ENCODE measurements at regions of chr4 and their contacts with region 1.

Region 1: GRCh38 chr4:109977854-109978501 is 65.3 kb downstream of the EGF start:
- DNase-seq: peak; percentile 51
- H3K4me3 ChIP-seq: no peak overlapping the region
- H3K27ac ChIP-seq: no peak overlapping the region
- H3K4me1 ChIP-seq: no peaks in the 10 kb centered on the region
- H3K27me3 ChIP-seq: peaks cover 17 to 20% of the 10 kb centered on the region in 2 experiments
- CTCF ChIP-seq: peak; percentile 34 to 43
- POLR2A ChIP-seq: no peak

Region 2: DNA sequence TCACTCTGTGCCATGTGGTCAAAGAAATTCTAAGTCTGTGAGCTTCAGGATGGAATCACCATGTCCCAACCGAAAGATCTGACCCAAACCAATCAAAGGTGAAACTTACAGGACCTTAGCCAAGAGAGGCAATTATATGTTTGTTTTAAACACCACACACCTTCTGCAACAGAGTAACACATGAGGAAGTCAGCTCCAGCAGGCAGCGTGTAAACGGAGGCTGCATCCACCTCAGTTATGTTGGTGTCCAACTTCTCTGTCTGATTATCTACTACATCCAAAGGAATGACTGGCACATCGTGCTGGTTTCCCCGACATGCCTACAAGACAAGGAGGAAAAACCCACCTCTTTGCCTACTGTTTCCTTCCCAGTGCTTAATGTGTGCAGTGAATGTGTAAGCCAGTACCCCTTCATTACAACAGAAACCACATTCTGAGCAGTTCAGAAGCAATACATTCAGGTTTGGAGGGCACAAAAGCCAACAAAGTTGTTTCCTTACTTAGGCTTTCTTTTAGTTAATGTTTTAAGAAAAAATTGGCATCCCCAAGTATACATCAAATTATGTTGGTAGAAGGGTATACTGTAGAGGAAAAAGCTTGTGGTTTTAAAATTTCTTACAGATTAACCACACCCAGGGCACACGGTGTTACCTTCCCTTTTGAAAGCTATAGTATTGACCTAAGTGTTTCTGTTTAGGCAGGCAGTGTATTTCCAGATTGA is 287.1 kb before region 1 on chr4:
- CTCF ChIA-PET with region 1: no interaction called
- POLR2A ChIA-PET with region 1: no interaction called
- dilution Hi-C with region 1: no loop called
- intact Hi-C with region 1: no loop called
- DNase-seq: no peak
- H3K4me3 ChIP-seq: no peak overlapping the region
- H3K27ac ChIP-seq: no peak overlapping the region
- H3K4me1 ChIP-seq: no peaks in the 10 kb centered on the region
- H3K27me3 ChIP-seq: no peaks in the 10 kb centered on the region
- CTCF ChIP-seq: no peak
- POLR2A ChIP-seq: no peak

Region 3: DNA sequence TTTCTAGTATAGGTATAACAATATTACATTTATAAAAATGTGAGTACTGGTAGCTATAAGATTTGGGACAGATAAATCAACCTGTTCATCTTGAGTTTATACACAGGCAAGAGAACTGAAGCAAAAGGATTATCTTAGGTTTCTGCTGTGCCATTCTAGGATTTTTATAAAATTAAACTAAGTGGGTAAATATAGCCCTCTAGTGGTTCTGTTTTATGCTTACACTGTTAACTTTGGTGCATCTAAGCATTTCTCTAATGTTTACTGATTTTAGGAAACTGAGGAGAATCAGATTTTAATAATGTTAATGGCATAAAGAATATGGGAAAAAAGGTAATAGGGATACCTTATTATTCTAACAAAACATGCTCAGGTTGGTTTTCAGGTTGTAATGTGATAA is 151.3 kb before region 1 on chr4:
- CTCF ChIA-PET with region 1: interaction called, 19 read pairs
- POLR2A ChIA-PET with region 1: no interaction called
- dilution Hi-C with region 1: no loop called
- intact Hi-C with region 1: loop called (anchors 1 kb)
- DNase-seq: peak; percentile 38
- H3K4me3 ChIP-seq: no peak overlapping the region
- H3K27ac ChIP-seq: no peak overlapping the region
- H3K4me1 ChIP-seq: no peaks in the 10 kb centered on the region
- H3K27me3 ChIP-seq: no peaks in the 10 kb centered on the region
- CTCF ChIP-seq: peak; percentile 14 to 28
- POLR2A ChIP-seq: no peak

Measured in endothelial cell of umbilical vein (primary cell).